ENCODE measurements at regions of chr18 and their contacts with region 1.

Region 1: GRCh38 chr18:25038261-25038660 is 313.7 kb downstream of the ZNF521 start:
- DNase-seq: no peak
- ATAC-seq: no peak
- H3K4me3 Mint-ChIP-seq: no peak overlapping the region
- H3K27ac Mint-ChIP-seq: no peak overlapping the region
- H3K4me1 Mint-ChIP-seq: no peaks in the 10 kb centered on the region
- H3K27me3 Mint-ChIP-seq: peaks cover 3% of the 10 kb centered on the region
- CTCF ChIP-seq: no peak

Region 2: DNA sequence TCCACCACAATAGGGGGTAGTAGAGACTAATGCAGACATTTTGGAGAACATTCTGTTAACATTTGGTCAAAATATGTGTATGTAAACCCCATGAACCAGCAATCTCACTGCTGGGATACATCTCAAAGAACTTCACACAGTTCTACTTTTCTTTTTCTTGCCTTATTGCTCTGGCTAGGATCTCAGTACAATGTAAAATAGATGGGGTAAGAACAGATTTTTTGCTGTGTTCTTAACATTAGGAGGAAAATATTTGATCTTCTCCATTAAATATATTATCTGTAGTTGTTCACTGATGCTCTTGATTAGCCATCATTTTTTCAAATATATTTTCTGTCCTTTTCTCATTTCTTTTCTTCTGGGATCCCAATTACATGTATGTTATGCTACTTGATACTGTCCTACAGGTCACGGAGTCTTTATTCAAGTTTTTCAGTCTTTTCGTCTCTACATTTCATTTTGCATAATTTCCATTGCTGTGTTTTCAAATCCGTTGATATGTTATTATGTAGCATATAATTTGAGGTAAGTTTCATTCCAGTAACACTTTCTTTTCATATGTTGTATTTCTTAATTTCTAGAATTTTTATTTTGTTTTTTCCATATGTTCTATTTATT is 38.5 kb before region 1 on chr18:
- CTCF ChIA-PET with region 1: no interaction called
- POLR2A ChIA-PET with region 1: no interaction called
- intact Hi-C with region 1: loop called (anchors 1 kb)
- DNase-seq: no peak
- ATAC-seq: no peak
- H3K4me3 Mint-ChIP-seq: no peak overlapping the region
- H3K27ac Mint-ChIP-seq: no peak overlapping the region
- H3K4me1 Mint-ChIP-seq: peaks cover 3% of the 10 kb centered on the region
- H3K27me3 Mint-ChIP-seq: peaks cover 3% of the 10 kb centered on the region
- CTCF ChIP-seq: no peak

Region 3: DNA sequence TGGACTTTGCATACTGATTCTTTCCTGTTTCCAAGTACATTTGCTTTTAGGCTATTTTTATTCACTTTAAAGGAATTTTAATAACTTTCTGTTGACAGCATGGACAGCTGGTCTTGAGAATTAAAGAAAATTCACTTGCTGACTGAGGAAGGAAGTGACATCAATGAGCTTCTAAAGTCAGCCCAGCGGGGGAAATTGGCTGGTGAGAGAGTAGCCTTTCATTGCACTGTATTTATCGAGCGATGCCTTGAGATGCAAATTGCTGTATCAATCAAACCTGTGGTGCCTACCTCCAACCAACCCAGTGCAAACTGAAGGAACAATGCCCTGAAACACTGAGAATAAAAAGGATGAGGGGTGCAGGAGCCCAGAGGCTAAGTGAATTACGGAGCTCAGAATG is 1918.6 kb after region 1 on chr18:
- CTCF ChIA-PET with region 1: no interaction called
- POLR2A ChIA-PET with region 1: no interaction called
- intact Hi-C with region 1: no loop called
- DNase-seq: no peak
- ATAC-seq: no peak
- H3K4me3 Mint-ChIP-seq: no peak overlapping the region
- H3K27ac Mint-ChIP-seq: no peak overlapping the region
- H3K4me1 Mint-ChIP-seq: no peaks in the 10 kb centered on the region
- H3K27me3 Mint-ChIP-seq: no peaks in the 10 kb centered on the region
- CTCF ChIP-seq: no peak

Measured in activated B cell treated with CpG ODN at 0.5 μM for 24 hours (primary cell).